ENCODE measurements at regions of chr19 and their contacts with region 1.

Region 1: DNA sequence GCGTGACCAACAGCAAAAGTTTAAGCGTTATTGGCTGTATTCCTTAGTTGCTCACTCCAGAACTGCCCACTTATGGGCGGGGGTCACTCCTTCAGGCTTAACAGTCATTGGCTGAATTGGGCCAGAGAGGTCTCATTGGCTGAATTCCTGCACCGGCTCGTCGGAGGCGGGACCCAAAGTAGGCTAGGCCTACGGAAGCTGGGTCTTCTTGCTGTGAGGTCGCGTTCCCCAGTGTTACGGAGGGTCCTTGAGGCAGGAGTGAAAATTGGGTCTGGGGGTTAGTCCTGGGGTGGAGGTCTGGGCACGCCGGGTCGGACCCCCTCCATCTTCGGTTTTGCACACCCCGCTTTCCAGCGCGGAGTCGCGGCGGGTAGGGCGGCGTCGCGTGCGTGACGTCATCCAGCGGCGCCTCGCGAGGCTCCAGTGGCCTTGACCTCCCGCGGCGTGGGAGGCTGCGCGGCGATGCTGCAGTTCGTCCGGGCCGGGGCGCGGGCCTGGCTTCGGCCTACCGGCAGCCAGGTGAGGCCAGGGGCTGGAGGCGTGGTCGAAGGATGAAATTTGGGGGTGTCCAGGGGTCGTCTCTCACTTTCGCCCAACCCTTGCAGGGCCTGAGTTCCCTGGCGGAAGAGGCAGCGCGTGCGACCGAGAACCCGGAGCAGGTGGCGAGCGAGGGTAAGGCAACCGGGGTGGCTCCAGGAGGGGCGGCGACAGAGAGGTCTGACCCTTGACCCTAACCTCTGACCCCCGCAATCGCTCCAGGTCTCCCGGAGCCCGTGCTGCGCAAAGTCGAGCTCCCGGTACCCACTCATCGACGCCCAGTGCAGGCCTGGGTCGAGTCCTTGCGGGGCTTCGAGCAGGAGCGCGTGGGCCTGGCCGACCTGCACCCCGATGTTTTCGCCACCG is at the start of gene MRPL4:
- DNase-seq: peak; percentile 100
- ATAC-seq: peak; percentile 96
- H3K4me3 ChIP-seq: peak within 1 kb of the TSS; percentile 97
- H3K27ac ChIP-seq: peak within 1 kb of the TSS; percentile 46
- H3K4me1 ChIP-seq: peaks cover 8% of the 10 kb centered on the region; the same call in 1 of the 2 replicates
- H3K27me3 ChIP-seq: no peaks in the 10 kb centered on the region
- CTCF ChIP-seq: no peak
- total RNA-seq, gene MRPL4: 336 and 427 TPM in 2 replicates

Region 2: GRCh38 chr19:10027158-10027693 is 224.8 kb before region 1 on chr19:
- CTCF ChIA-PET with region 1: no interaction called
- POLR2A ChIA-PET with region 1: no interaction called
- intact Hi-C with region 1: loop called (anchors 5 kb)
- DNase-seq: peak; percentile 76
- ATAC-seq: peak; percentile 61
- H3K4me3 ChIP-seq: peak overlapping the region; percentile 43; the same call in 1 of the 2 replicates
- H3K27ac ChIP-seq: peak overlapping the region; percentile 12; the same call in 1 of the 2 replicates
- H3K4me1 ChIP-seq: peaks cover 9% of the 10 kb centered on the region
- H3K27me3 ChIP-seq: peaks cover 20% of the 10 kb centered on the region
- CTCF ChIP-seq: no peak

Region 3: DNA sequence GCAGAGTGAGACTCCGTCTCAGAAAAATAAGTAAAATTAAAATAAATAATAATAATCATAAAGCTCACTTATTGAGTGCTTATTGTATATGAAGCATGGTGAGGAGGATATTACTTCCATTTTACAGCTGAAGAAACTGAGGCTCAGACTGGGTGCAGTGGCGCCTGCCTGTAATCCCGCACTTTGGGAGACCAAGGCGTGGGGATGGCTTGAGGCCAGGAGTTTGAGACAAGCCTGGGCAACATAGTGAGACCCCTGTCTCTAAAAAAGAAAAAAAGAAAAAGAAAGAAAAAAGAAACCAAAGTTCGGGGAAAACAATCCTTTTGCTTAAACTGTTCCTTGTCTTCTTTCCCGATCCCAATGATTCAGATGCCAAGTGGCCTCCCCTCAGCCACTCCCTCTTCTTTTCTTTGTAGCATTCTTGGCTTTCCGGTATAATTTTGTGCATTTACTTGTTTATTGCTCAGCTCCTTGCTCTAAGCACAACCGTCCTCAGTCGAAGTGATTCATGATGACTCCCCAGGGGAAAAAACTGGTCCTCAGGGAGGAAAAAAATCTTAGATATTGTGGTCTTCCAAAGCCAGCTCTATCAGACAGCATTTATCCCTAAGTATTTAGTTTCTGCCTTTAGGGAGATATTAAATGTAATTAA is 131.4 kb before region 1 on chr19:
- CTCF ChIA-PET with region 1: interaction called, 5 read pairs
- POLR2A ChIA-PET with region 1: no interaction called
- intact Hi-C with region 1: loop called (anchors 1 kb)
- DNase-seq: peak; percentile 96
- ATAC-seq: peak; percentile 47
- H3K4me3 ChIP-seq: peak overlapping the region; percentile 28; the same call in 1 of the 2 replicates
- H3K27ac ChIP-seq: peak overlapping the region; percentile 78
- H3K4me1 ChIP-seq: peaks cover 20% of the 10 kb centered on the region
- H3K27me3 ChIP-seq: no peaks in the 10 kb centered on the region
- CTCF ChIP-seq: no peak

Region 4: GRCh38 chr19:10228920-10229319 is 23.1 kb before region 1 on chr19:
- CTCF ChIA-PET with region 1: interaction called, 6 read pairs
- POLR2A ChIA-PET with region 1: interaction called, 8 read pairs
- intact Hi-C with region 1: loop called (anchors 1 kb)
- DNase-seq: peak; percentile 39
- ATAC-seq: no peak
- H3K4me3 ChIP-seq: no peak overlapping the region
- H3K27ac ChIP-seq: no peak overlapping the region
- H3K4me1 ChIP-seq: peaks cover 10% of the 10 kb centered on the region
- H3K27me3 ChIP-seq: no peaks in the 10 kb centered on the region
- CTCF ChIP-seq: peak; percentile 56

Region 5: DNA sequence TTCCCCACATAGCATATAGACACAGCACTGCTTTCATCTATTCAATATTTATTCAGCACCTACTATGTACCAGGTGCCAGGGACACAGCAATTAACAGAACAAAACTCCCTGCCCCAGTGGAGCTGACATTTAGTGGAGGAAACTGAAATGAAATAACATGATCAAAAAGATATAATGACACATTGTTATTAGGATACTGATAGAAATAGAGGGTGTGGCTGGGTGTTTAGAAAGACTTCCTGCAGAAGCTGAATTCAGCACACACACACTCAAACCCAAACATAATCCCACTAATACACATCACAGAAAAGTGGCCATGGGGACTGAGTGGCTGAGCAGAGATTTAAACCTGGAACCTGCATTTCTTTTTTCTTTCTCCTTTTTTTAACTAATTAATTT is 155.1 kb after region 1 on chr19:
- CTCF ChIA-PET with region 1: no interaction called
- POLR2A ChIA-PET with region 1: no interaction called
- intact Hi-C with region 1: no loop called
- DNase-seq: no peak
- ATAC-seq: no peak
- H3K4me3 ChIP-seq: no peak overlapping the region
- H3K27ac ChIP-seq: no peak overlapping the region
- H3K4me1 ChIP-seq: peaks cover 5% of the 10 kb centered on the region; the same call in 1 of the 2 replicates
- H3K27me3 ChIP-seq: no peaks in the 10 kb centered on the region
- CTCF ChIP-seq: no peak